HepG2 (cell line): ENCODE measurements at regions of chr5 and their contacts with region 1.

Region 1: GRCh38 chr5:85814596-85814995 is 803.1 kb upstream of the COX7C start:
- DNase-seq: no peak
- ATAC-seq: no peak
- H3K4me3 ChIP-seq: no peak overlapping the region
- H3K27ac ChIP-seq: no peak overlapping the region
- H3K4me1 ChIP-seq: no peaks in the 10 kb centered on the region
- H3K27me3 ChIP-seq: no peaks in the 10 kb centered on the region
- CTCF ChIP-seq: no peak
- EP300 ChIP-seq: no peak
- POLR2A ChIP-seq: no peak
- RAD21 ChIP-seq: no peak

Region 2: DNA sequence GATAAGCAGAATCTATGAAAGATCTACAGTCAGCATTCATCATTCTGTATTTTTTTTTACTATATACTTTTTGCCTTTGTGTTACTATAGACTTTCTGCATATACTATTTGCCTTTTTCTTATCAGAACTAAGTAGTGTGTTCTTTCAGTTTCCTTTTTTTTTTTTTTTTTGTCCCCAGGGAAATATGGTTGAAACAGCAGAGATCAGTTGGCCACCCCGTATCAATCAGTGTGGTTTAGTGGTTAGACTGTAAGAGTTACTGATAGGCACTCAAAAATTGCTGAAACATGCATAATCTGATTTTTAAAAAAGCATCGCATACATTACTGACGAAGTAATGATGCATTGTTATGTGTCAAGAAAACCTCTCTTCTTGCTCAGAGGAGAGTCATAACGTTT is 439.1 kb before region 1 on chr5:
- CTCF ChIA-PET with region 1: no interaction called
- POLR2A ChIA-PET with region 1: no interaction called
- in situ Hi-C with region 1: no loop called
- intact Hi-C with region 1: loop called (anchors 5 kb)
- DNase-seq: no peak
- ATAC-seq: no peak
- H3K4me3 ChIP-seq: no peak overlapping the region
- H3K27ac ChIP-seq: no peak overlapping the region
- H3K4me1 ChIP-seq: no peaks in the 10 kb centered on the region
- H3K27me3 ChIP-seq: no peaks in the 10 kb centered on the region
- CTCF ChIP-seq: no peak
- EP300 ChIP-seq: no peak
- POLR2A ChIP-seq: no peak
- RAD21 ChIP-seq: no peak